Tibial artery (tissue), 4 donors: ENCODE measurements at regions of chr1 and their contacts with region 1.

Region 1: DNA sequence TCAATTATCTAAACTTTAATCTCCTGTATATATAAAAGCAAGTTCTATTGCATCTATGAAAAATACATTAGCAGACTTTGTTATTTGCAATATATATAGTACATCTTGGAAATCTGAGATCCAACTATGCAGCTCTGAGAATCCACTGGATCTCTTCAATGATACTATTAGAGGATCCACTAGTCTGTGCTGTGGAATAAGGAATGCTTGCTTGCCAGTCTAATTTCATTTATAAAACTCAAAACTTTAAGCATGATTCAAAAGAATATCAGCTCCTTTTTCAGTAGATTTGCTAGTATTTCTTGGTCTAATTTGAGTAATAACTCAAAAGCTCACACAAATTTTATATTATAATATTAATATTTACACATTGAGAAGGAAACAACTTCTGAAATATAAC is 115.1 kb downstream of the SPATA6 start:
- DNase-seq: no peak
- H3K4me3 ChIP-seq: no peak overlapping the region
- H3K27ac ChIP-seq: no peak overlapping the region
- H3K4me1 ChIP-seq: no peaks in the 10 kb centered on the region
- H3K27me3 ChIP-seq: no peaks in the 10 kb centered on the region
- CTCF ChIP-seq: no peak

Region 2: GRCh38 chr1:48039088-48040054 is 317.5 kb before region 1 on chr1:
- intact Hi-C with region 1: no loop called
- DNase-seq: peak in 1 of 2 donors; percentile 46
- H3K4me3 ChIP-seq: no peak overlapping the region
- H3K27ac ChIP-seq: no peak overlapping the region
- H3K4me1 ChIP-seq: peaks cover 0 to 18% (median 10%) of the 10 kb centered on the region in 4 donors
- H3K27me3 ChIP-seq: no peaks in the 10 kb centered on the region
- CTCF ChIP-seq: no peak

Region 3: DNA sequence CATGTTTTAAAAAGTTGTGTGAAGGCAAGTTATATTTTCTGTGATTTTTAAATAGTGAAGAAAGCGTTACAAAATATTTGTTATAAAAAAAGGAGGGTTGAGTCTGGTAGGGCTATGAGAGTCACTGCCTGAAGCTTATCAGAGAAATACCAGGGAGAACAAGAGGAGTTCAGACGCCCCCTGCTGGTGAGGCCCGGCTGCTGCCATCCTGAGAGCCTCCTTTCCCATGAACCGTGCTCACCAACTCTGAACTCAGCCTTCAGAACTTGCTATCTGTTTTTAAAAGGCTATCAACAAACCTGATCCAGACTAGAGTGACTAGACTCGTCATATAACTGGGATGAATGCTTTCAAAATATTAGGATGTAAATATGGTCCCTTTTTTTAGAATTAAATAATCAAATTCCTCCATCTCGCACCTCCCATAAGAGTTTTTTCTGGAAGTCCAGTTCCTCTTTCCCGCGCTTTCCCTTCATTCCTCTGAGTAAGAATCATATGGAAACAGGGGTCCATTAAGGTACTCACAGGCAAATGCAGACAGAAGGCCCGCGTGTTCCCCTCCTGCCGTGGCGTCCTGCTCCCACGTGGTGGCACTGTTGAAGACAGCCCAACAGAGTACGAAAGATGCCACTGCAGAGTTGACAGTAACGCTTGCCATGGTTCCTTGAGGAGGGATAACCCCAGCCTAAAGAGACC is 141.3 kb after region 1 on chr1:
- intact Hi-C with region 1: loop called (anchors 10 kb)
- DNase-seq: peak; percentile 80 to 88
- H3K4me3 ChIP-seq: no peak overlapping the region
- H3K27ac ChIP-seq: no peak overlapping the region
- H3K4me1 ChIP-seq: peaks cover 0 to 17% (median 8%) of the 10 kb centered on the region in 4 donors
- H3K27me3 ChIP-seq: no peaks in the 10 kb centered on the region
- CTCF ChIP-seq: peak; percentile 85 to 90

Region 4: DNA sequence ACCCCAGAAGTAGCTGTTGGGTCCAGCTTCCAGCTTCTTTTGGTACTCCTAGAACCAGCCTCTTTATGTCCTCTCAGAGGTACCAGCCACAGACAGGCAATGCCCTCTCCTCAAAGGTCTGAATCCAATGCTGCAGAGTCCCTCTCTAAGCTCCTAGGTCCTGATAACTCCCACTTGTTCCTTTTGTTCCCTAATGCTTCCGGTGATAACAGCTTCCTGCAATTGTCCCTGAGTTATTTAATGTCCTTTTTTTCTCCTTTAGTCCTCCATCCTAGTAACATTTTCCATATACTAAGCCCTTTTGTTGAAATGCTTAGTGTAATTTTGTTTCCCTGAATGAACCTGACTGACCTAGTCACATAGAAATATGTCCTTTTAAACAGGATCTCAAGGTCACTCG is 621.5 kb after region 1 on chr1:
- intact Hi-C with region 1: no loop called
- DNase-seq: no peak
- H3K4me3 ChIP-seq: no peak overlapping the region
- H3K27ac ChIP-seq: no peak overlapping the region
- H3K4me1 ChIP-seq: no peaks in the 10 kb centered on the region
- H3K27me3 ChIP-seq: no peaks in the 10 kb centered on the region
- CTCF ChIP-seq: no peak